ENCODE measurements at regions of chr6 and their contacts with region 1.

Region 1: DNA sequence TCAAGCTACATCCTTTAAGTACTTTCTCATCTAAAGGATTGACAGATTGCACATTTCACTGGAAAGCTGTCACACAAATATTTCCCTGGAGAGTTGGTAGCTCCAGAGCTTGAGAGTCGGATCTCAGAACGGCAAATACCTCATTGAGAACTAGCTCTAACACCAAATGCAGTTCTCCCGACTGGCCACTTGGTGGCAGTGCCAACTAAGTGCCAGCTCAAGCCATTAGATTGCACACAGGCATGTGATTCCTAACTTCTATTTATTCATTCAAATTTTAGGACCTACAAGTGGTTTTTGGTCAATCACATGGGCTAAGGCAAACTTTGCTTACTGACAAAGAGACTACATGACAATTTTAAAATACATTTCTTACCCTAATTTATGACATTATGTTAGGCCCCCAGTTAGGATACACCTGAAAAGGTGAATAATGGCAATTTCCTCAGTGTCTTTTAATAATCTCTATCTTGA is 7.9 kb upstream of the MCHR2 start:
- DNase-seq: peak in 4 of 5 donors; percentile 18 to 31 (median 26)
- ATAC-seq: peak in 3 of 4 donors; percentile 42 to 57 (median 55)
- H3K4me3 ChIP-seq: no peak overlapping the region
- H3K27ac ChIP-seq: no peak overlapping the region
- H3K4me1 ChIP-seq: no peaks in the 10 kb centered on the region
- H3K27me3 ChIP-seq: peaks cover 0 to 45% (median 3%) of the 10 kb centered on the region in 9 donors
- CTCF ChIP-seq: peak; percentile 71 to 88 (median 81)
- POLR2A ChIP-seq: no peak

Region 2: DNA sequence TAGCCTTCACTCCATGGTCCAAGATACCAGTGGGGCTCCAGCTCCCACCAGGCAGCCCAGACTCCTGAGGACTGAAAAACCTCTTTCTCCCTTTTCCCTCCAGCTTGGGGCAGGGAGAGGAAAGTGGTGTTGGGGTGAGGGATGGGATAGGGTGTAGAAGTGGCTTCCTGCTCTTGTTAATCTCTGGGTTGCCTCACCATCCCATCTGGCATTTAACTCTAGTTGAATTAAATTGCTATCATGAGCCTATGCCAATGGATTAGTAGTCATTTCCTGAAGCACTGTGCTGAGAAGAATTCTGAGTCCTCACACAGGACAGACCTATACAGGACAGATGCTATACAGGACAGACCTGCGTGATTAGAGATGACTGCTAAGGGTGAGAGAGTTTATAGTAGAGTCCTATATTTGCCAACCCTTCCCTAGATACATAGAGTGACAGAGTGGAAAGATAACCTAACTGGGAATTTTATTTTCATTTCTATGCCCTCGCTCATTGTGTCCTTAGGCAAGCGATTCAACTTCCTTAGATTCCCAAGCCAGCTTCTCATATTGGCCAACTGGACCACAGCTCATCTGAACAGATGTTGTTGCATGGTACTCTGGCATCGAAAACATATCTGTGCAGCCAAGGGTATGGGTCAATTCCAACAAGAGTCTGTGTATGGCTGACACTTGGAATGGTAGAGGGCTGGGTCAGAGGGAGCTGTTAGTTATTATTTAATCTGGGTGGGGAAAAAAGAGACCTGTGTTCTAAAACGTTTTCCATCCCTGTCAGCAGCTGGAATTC is 50.7 kb before region 1 on chr6:
- intact Hi-C with region 1: no loop called
- DNase-seq: no peak
- ATAC-seq: no peak
- H3K4me3 ChIP-seq: no peak overlapping the region
- H3K27ac ChIP-seq: no peak overlapping the region
- H3K4me1 ChIP-seq: no peaks in the 10 kb centered on the region
- H3K27me3 ChIP-seq: no peaks in the 10 kb centered on the region
- CTCF ChIP-seq: no peak
- POLR2A ChIP-seq: no peak

Region 3: DNA sequence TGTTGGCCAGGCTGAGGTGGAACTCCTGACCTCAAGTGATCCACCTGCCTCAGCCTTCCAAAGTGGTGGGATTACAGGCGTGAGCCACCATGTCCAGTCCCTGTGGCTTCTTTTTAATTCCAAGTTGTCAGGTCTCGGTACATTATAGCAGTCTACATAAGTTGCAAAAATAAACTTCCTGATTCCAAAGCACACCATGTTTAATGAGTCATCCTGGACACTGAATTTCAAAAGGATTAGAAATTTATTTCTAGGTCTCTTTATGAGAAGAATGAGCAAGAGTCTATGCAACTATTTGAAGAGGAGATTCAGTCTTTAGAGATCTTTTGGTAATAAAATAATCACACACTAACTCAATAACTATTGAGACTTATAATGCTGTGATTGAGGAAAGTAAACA is 56.0 kb after region 1 on chr6:
- intact Hi-C with region 1: no loop called
- DNase-seq: no peak
- ATAC-seq: no peak
- H3K4me3 ChIP-seq: no peak overlapping the region
- H3K27ac ChIP-seq: no peak overlapping the region
- H3K4me1 ChIP-seq: no peaks in the 10 kb centered on the region
- H3K27me3 ChIP-seq: no peaks in the 10 kb centered on the region
- CTCF ChIP-seq: no peak
- POLR2A ChIP-seq: no peak

Region 4: DNA sequence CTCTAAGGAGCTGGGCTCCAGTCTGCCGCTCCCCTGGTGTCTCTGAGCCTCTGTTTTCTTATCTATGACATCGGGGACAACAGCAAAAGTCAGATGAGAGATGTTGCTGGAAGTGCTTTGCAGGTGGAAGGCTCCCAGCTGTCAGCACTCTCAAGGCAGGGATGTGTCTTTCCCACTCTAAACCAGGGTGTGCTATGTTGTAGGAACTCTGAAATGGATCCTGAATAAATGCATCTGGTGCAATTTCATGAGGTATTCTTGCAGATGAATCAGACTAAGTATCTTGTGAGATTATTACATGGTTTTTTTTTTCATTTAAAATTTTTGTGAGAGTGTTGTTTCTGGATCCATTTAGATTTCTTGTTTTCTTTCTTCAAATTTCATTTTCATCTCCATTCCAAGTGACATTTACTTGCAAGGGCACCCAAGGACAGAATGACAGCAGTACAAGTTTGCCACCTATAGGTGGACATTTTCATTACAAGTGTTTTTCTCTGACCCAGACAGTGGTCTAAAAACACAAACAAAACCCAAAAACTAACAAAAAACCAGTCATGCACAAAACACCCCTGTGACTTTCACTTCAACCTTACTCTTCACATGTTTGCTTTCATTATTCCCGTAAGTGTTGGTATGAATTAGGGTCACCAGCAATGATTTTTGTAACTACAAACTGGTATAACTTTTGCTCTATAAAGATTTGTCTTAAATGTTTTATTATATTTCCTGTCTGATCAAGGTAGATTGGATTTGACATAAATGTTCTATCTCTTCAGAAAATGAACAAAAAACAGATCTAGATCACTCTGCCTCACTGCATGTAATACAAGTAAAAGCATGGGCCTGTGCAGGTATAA is 477.5 kb after region 1 on chr6:
- intact Hi-C with region 1: loop called in 6 of 10 experiments (anchors 5 to 10 kb)
- DNase-seq: no peak
- ATAC-seq: no peak
- H3K4me3 ChIP-seq: no peak overlapping the region
- H3K27ac ChIP-seq: no peak overlapping the region
- H3K4me1 ChIP-seq: no peaks in the 10 kb centered on the region
- H3K27me3 ChIP-seq: peaks cover 0 to 28% (median 6%) of the 10 kb centered on the region in 9 donors
- CTCF ChIP-seq: peak; percentile 47 to 76 (median 59)
- POLR2A ChIP-seq: no peak

Region 5: GRCh38 chr6:100657678-100658330 is 655.9 kb after region 1 on chr6:
- intact Hi-C with region 1: loop called in 3 of 10 experiments (anchors 10 kb)
- DNase-seq: no peak
- ATAC-seq: no peak
- H3K4me3 ChIP-seq: no peak overlapping the region
- H3K27ac ChIP-seq: no peak overlapping the region
- H3K4me1 ChIP-seq: no peaks in the 10 kb centered on the region
- H3K27me3 ChIP-seq: no peaks in the 10 kb centered on the region
- CTCF ChIP-seq: peak in 8 of 12 donors; percentile 22 to 51 (median 42)
- POLR2A ChIP-seq: no peak